Cardiac septum (tissue), 1 donor: ENCODE measurements at regions of chr1 and their contacts with region 1.

Region 1: DNA sequence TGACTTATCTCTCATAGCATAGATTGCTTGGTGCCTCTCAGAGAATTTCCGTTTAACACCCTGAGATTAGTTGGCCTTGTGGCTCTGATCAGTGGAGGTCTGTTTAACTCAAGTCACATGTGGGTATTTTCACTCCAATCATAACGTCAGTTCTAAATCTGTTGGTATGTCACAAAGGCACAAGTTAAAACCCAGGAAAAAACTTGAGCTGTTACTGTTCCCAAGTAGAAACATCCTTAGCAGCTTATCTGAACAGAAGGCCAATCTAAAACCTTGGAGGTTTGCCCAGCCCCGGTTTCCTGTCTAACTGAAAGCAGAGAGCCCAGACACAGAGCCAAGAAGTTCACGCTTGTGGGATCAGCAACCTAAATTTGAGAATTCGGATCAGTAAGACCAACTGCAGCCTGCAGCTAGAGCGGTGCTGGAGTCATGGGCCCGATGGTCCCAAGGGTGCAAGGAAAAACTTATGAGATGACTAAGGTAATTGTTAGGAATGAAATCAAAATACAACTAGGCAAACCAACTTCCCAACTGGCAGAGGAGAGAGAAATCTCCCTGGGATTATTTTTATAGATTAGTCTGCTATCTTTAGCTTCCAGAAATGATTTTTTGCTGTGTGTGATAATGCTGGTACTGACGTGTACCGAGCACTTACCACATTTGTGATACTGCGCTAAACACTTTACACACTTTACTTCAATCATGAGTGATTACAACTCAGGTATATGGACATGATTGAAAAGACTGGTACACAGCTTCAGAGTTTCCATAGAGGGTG is 90.2 kb upstream of the C1orf21 start:
- DNase-seq: peak; percentile 91

Region 2: GRCh38 chr1:184242507-184242943 is 54.1 kb before region 1 on chr1:
- intact Hi-C with region 1: loop called (anchors 5 kb)
- DNase-seq: no peak

Region 3: GRCh38 chr1:184329962-184330868 is 33.6 kb after region 1 on chr1:
- intact Hi-C with region 1: loop called (anchors 5 kb)
- DNase-seq: no peak

Region 4: DNA sequence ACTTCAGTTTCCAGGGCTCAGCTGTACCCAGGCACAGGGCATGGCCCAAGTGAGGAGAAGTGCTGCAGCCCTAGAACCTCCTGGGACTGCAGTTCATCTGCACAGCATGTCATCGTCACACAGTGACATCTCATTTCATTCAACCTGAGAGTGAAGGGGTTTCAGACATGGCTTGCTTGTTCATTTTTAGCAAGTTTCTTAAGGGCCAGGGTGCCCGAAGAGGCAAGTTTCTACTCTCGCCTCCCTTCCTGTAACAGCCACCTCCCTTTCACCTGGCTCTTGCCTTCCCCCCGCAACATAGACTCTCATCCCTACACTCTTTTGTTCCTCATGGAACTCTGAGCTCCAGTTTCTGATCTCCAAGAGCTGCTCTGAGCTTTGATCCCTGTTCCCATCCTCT is 198.3 kb after region 1 on chr1:
- intact Hi-C with region 1: loop called (anchors 5 kb)
- DNase-seq: no peak

Region 5: DNA sequence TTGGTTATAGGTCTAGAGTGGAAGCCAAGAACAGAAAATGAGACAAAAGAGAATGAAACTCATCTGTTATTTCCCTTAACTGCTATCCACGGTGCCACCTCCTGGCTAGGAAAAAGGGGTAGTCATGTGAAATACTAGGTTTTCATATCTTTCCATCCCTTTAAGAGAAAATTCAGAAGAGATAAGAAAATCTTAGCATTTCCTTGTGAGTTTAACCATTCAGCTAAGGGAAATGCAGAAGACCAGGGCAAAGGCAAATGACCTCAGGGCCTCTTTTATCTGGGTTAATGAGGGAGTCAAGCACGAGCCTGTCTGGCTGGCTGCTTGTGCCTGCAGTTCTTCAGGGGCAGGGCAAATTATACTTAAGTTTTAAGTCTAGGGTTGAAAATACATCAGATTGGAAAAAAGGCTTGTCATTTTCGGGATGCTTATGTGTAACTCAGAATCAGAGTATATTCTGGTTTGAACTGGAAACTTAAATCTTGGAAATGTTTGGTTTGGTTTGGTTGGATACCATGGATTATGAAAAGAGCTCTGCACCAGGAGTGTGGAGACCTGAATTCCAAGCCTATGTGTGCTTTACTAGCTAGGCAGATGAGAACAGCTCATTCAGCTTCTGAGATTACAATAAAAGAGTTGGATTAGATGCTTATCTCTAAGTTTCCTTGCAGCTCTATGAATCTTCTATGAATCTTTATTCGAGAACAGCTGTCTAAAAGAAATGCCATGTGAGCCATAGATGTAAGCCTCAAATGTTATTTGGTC is 657.8 kb after region 1 on chr1:
- intact Hi-C with region 1: no loop called
- DNase-seq: no peak